ENCODE measurements at regions of chr10 and their contacts with region 1.

Region 1: GRCh38 chr10:8389630-8390029 is 335.1 kb downstream of the GATA3 start:
- DNase-seq: peak; percentile 87
- ATAC-seq: peak; percentile 95
- H3K4me3 ChIP-seq: no peak overlapping the region
- H3K27ac ChIP-seq: peak overlapping the region; percentile 100
- H3K4me1 ChIP-seq: peaks cover 37% of the 10 kb centered on the region
- H3K27me3 ChIP-seq: no peaks in the 10 kb centered on the region
- CTCF ChIP-seq: no peak

Region 2: DNA sequence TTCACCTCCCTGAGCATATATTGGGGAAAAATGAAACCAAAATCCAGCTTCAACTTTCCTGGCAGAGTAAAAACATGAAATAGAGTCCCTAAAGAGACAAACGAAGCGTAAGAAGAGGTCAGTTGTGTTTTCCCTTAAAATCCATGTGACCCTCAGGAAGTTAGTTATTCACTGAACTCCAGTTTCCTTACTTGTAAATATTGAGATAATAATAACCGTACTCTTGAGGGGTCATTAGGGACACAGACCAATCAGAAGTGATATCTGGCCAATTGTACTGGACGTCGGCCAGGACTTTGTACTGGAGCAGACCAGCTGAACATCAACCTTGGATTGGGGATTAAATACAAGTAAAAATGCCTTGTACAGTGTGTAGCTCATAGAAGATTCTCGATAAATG is 168.2 kb before region 1 on chr10:
- CTCF ChIA-PET with region 1: no interaction called
- POLR2A ChIA-PET with region 1: no interaction called
- intact Hi-C with region 1: no loop called
- DNase-seq: no peak
- ATAC-seq: no peak
- H3K4me3 ChIP-seq: no peak overlapping the region
- H3K27ac ChIP-seq: no peak overlapping the region
- H3K4me1 ChIP-seq: no peaks in the 10 kb centered on the region
- H3K27me3 ChIP-seq: no peaks in the 10 kb centered on the region
- CTCF ChIP-seq: no peak

Region 3: DNA sequence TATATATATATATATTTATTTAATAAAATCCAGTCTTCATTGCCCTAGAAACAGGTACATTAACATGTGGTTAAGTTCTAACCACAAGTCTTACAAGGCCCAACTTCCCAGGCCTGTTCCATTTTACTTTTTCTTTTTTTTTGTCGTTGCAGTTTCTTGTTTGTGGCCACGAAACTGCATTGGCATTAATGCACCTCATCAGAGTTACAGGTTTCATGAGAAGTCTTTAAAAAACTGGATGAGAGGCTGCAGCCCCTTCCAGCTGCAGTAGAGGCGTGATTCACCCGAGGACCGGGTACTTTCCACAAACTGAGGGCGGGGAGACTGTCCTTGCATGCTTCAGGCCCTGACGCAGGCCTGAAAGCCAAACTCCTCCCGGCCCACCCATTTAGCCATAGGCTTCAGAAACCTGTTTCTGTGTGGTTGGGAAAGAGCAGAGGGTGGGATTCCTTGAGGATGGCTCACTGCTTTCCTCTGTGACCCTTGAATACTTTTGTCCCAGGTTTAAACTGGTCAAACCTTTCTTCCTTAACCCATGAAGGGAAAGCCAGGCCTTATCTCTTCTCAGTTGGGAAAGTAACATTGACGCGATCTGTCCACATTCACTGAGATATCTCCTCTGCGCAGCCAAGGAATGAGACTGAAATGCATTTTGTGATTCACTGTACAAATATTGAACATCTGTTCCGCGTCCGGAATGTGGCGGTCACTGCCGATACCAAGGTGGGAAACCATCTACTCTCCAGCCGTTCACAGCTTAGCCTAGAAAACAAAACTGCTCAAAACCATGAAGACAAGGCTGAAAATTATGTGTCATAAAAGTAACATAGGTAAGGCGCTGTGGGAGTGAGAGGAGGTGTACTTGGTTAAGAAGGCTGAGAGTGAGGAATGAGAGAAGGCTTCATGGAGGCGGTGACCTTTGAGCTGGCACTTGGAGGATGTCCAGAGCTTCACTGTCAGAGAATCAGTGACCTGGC is 23.4 kb before region 1 on chr10:
- CTCF ChIA-PET with region 1: no interaction called
- POLR2A ChIA-PET with region 1: no interaction called
- intact Hi-C with region 1: loop called (anchors 1 kb)
- DNase-seq: peak; percentile 91
- ATAC-seq: peak; percentile 86
- H3K4me3 ChIP-seq: no peak overlapping the region
- H3K27ac ChIP-seq: peak overlapping the region; percentile 97
- H3K4me1 ChIP-seq: peaks cover 26% of the 10 kb centered on the region
- H3K27me3 ChIP-seq: no peaks in the 10 kb centered on the region
- CTCF ChIP-seq: no peak

Region 4: GRCh38 chr10:8616166-8616565 is 226.5 kb after region 1 on chr10:
- CTCF ChIA-PET with region 1: no interaction called
- POLR2A ChIA-PET with region 1: no interaction called
- intact Hi-C with region 1: no loop called
- DNase-seq: peak; percentile 71
- ATAC-seq: no peak; the same call in 1 of the 2 replicates
- H3K4me3 ChIP-seq: no peak overlapping the region
- H3K27ac ChIP-seq: peak overlapping the region; percentile 98
- H3K4me1 ChIP-seq: peaks cover 50% of the 10 kb centered on the region
- H3K27me3 ChIP-seq: no peaks in the 10 kb centered on the region
- CTCF ChIP-seq: no peak